HepG2 (cell line): ENCODE measurements at regions of chr6 and their contacts with region 1.

Region 1: GRCh38 chr6:41581381-41581991 is 35.3 kb downstream of the FOXP4 start:
- DNase-seq: no peak
- ATAC-seq: no peak
- H3K4me3 ChIP-seq: no peak overlapping the region
- H3K27ac ChIP-seq: no peak overlapping the region
- H3K4me1 ChIP-seq: peaks cover 86% of the 10 kb centered on the region
- H3K27me3 ChIP-seq: no peaks in the 10 kb centered on the region
- CTCF ChIP-seq: no peak
- EP300 ChIP-seq: no peak
- POLR2A ChIP-seq: no peak
- RAD21 ChIP-seq: no peak

Region 2: DNA sequence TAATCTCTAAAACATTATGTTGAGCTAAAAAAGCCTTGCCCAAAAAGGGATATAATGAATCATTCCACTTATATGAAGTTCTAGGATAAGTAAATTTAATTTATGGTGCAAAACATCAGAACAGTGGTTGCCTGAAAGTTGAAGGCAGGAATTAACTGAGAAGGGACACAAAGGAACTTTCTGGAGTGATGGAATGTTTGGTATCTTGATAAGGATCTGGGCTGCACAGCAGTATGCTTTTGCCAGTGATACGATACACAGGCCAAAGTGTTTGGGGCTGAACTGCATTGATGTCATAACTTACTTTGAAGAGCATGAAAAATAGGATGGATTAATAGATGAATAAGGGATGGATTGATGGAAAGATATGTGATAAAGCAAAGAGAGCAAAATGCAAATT is 848.2 kb before region 1 on chr6:
- CTCF ChIA-PET with region 1: no interaction called
- POLR2A ChIA-PET with region 1: no interaction called
- in situ Hi-C with region 1: no loop called
- intact Hi-C with region 1: no loop called
- DNase-seq: no peak
- ATAC-seq: no peak
- H3K4me3 ChIP-seq: no peak overlapping the region
- H3K27ac ChIP-seq: no peak overlapping the region
- H3K4me1 ChIP-seq: no peaks in the 10 kb centered on the region
- H3K27me3 ChIP-seq: peaks cover 2 to 34% of the 10 kb centered on the region in 2 experiments; a peak in 3 of 5 replicates
- CTCF ChIP-seq: no peak
- EP300 ChIP-seq: no peak
- POLR2A ChIP-seq: no peak
- RAD21 ChIP-seq: no peak

Region 3: DNA sequence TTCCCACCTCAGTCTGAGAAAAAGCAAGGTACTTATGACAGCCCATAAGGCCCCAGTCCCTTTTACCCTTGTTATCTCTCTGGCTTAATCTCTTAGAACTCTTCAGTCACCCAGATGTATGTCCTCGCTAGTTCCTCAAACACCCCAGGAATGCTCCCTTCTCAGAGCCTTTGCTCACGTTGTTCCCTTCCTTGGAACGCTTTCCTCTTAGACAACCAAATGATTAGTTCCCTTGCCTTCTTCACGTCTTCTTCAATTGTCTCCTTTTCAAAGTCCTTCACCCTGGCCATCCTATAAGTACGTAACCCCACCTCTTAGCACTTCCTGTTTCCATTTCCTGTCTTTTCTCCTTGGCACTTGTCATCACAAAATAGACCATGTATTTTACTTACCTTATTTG is 529.6 kb before region 1 on chr6:
- CTCF ChIA-PET with region 1: no interaction called
- POLR2A ChIA-PET with region 1: no interaction called
- in situ Hi-C with region 1: loop called (anchors 10 kb)
- intact Hi-C with region 1: no loop called
- DNase-seq: no peak
- ATAC-seq: no peak
- H3K4me3 ChIP-seq: no peak overlapping the region
- H3K27ac ChIP-seq: no peak overlapping the region
- H3K4me1 ChIP-seq: peaks cover 66% of the 10 kb centered on the region
- H3K27me3 ChIP-seq: no peaks in the 10 kb centered on the region
- CTCF ChIP-seq: no peak
- EP300 ChIP-seq: no peak
- POLR2A ChIP-seq: no peak
- RAD21 ChIP-seq: no peak

Region 4: GRCh38 chr6:41463062-41463930 is 118.2 kb before region 1 on chr6:
- CTCF ChIA-PET with region 1: no interaction called
- POLR2A ChIA-PET with region 1: interaction called, 11 read pairs
- in situ Hi-C with region 1: no loop called
- intact Hi-C with region 1: no loop called
- DNase-seq: peak; percentile 77
- ATAC-seq: peak; percentile 92
- H3K4me3 ChIP-seq: peak overlapping the region in 1 of 3 experiments; percentile 24; a peak in 1 of 6 replicates
- H3K27ac ChIP-seq: no peak overlapping the region
- H3K4me1 ChIP-seq: peaks cover 58% of the 10 kb centered on the region
- H3K27me3 ChIP-seq: peaks cover 0 to 24% of the 10 kb centered on the region in 2 experiments
- CTCF ChIP-seq: peak; percentile 90
- EP300 ChIP-seq: no peak; a peak in 1 of 4 replicates
- POLR2A ChIP-seq: no peak
- RAD21 ChIP-seq: peak; percentile 95

Region 5: DNA sequence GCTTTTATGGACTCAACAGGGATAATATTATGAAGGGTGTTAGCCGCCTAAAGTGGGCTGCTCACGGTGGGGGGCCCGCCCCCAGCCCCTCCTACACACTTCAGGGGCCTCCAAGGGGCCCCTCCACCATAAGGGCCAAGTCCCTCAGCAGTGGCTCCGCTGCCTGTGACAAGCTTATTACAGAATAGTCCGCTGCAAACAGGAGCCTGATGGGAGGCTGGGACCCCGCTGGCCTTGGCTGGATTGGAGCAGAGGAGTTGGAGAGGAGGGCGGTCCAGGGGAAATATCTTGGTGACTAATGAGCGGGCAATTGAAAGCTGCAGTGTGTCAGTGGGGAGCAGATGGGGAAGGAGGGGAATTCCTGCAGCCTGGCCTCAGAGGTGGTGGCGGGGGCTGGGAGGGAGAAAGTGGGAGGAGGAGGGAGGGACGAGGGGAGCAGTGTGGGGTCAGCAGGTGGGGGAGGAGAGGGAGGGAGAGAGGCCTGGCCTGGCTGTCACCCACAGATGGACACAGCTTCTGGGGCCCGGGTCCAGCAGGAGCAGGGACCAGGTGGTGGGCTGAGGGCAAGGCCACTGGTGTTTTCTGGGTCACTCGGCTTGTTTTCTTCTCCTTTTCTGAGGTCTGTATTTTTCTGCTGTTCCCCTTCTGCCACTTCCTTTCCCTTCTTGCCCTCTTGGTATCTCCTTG is 92.9 kb before region 1 on chr6:
- CTCF ChIA-PET with region 1: no interaction called
- POLR2A ChIA-PET with region 1: no interaction called
- in situ Hi-C with region 1: no loop called
- intact Hi-C with region 1: no loop called
- DNase-seq: peak; percentile 51
- ATAC-seq: peak; percentile 73
- H3K4me3 ChIP-seq: peak overlapping the region in 1 of 3 experiments; percentile 12; a peak in 1 of 6 replicates
- H3K27ac ChIP-seq: no peak overlapping the region
- H3K4me1 ChIP-seq: peaks cover 47% of the 10 kb centered on the region
- H3K27me3 ChIP-seq: peaks cover 9 to 52% of the 10 kb centered on the region in 2 experiments
- CTCF ChIP-seq: no peak
- EP300 ChIP-seq: no peak
- POLR2A ChIP-seq: no peak
- RAD21 ChIP-seq: no peak

Region 6: DNA sequence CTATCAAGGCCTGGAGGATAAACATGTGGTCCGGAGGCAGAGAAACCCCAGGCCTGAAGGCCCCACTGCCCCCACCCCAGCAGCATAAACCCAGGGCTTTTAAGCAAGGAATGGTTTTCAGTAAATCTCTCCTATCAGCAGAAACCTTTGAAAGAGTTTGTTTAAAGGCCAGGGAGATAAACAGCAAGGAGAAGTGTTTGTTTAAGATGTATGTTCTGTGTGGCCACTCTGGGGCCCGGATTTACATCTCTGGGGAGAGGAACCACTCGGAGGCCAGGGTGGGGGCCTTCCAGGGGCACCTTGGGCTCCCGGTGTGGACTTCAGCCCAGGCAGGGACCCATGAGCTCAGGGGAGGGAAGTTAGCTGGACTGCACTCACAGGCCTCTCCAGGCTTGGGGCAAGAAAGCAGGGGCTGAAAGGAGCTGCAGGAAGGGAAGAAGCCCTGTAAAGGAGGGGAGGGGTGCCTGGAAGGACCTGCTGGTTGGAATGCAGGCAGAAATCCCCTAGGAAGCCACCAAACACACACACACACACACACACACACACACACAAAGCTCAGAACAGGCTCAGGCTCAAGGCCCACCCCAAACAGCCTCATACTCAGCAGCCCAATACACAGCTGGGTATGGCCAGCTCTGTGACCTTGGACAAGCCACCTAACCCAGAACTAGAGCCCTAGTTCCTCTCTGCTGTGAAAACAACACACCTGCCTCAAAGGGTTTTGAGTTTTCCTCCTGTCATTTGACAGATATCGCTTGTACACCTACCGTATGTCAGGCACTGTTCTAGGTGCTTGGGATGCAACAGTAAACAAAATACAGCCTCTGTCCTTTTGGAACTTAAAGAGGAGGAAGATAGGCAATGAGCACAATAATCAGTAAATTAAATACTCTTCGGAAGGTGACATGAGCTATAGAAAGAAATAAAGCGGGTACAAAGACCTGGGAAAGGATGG is 61.5 kb before region 1 on chr6:
- CTCF ChIA-PET with region 1: no interaction called
- POLR2A ChIA-PET with region 1: interaction called, 60 read pairs
- in situ Hi-C with region 1: no loop called
- intact Hi-C with region 1: loop called (anchors 1 kb)
- DNase-seq: peak; percentile 97
- ATAC-seq: peak; percentile 93
- H3K4me3 ChIP-seq: peak overlapping the region in 2 of 3 experiments; percentile 8 to 50; a peak in 2 of 6 replicates
- H3K27ac ChIP-seq: peak overlapping the region; percentile 94
- H3K4me1 ChIP-seq: peaks cover 88% of the 10 kb centered on the region
- H3K27me3 ChIP-seq: no peaks in the 10 kb centered on the region
- CTCF ChIP-seq: peak; percentile 1; the same call in 1 of the 2 replicates
- EP300 ChIP-seq: peak in 1 of 2 experiments; percentile 98; a peak in 2 of 4 replicates
- POLR2A ChIP-seq: peak; percentile 74 to 77; a peak in 3 of 4 replicates
- RAD21 ChIP-seq: peak; percentile 45

Region 7: GRCh38 chr6:41545703-41546474 is 35.6 kb before region 1 on chr6 and contains the start of gene FOXP4:
- CTCF ChIA-PET with region 1: no interaction called
- POLR2A ChIA-PET with region 1: interaction called, 16 read pairs
- in situ Hi-C with region 1: no loop called
- intact Hi-C with region 1: loop called (anchors 1 kb)
- DNase-seq: peak; percentile 91
- ATAC-seq: peak; percentile 75
- H3K4me3 ChIP-seq: peak within 1 kb of the TSS; percentile 67 to 99 (median 99)
- H3K27ac ChIP-seq: peak within 1 kb of the TSS; percentile 66
- H3K4me1 ChIP-seq: peaks cover 48% of the 10 kb centered on the region
- H3K27me3 ChIP-seq: no peaks in the 10 kb centered on the region
- CTCF ChIP-seq: 0 out of 2 replicates have a peak, but pooled peaks have one; percentile 8
- EP300 ChIP-seq: 0 out of 4 replicates have a peak, but pooled peaks of 1 of the 2 experiments have one; percentile 43
- POLR2A ChIP-seq: no peak
- RAD21 ChIP-seq: peak; percentile 47; the same call in 1 of the 2 replicates
- total RNA-seq, gene FOXP4: 11.0 TPM in 2 replicates

Region 8: DNA sequence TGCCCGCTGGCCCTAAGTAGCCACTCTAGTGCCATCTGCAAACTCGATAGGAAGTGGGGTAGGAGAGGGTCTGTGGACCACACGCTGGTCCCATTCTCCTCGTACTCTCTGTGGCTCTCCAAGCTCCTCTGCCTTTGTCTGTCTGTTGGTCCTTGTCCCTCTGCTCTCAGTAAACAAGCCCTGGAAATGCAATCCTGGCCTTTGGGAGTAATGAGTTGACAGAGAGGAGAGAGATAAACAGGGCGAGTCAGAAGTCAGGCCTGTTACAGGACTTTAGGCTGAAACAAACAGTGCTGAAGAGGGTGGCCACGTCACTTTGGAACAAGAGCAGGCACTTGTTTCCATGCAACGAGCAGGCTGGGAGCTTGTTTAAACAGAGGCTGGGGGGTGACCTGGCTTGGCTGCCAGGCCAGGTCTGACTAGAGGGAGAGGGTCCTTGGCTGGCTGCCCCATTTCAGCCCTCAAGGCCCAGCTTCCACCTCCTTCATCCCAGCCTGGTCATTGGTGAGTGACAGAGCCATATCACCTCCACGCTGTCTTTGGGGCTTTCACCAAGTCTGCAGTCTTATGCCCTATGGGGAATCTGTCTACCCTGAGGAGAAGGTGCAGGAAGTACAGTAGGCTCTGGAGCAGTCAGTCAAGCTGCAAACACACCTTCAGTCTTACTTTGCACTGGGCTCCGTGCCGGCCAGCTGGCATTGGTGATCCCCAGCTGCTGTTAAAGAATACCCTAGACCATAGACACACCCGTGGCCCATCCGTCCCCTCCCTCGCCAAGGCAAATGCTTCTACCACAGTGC is 12.7 kb before region 1 on chr6:
- CTCF ChIA-PET with region 1: no interaction called
- POLR2A ChIA-PET with region 1: interaction called, 54 read pairs
- in situ Hi-C with region 1: no loop called
- intact Hi-C with region 1: loop called (anchors 1 kb)
- DNase-seq: peak; percentile 99
- ATAC-seq: peak; percentile 97
- H3K4me3 ChIP-seq: peak overlapping the region in 1 of 3 experiments; percentile 14; a peak in 1 of 6 replicates
- H3K27ac ChIP-seq: peak overlapping the region; percentile 84
- H3K4me1 ChIP-seq: peaks cover 73% of the 10 kb centered on the region
- H3K27me3 ChIP-seq: no peaks in the 10 kb centered on the region
- CTCF ChIP-seq: peak; percentile 40; the same call in 1 of the 2 replicates
- EP300 ChIP-seq: peak in 1 of 2 experiments; percentile 95; a peak in 3 of 4 replicates
- POLR2A ChIP-seq: peak in 1 of 2 experiments; percentile 11; a peak in 1 of 4 replicates
- RAD21 ChIP-seq: peak; percentile 37; the same call in 1 of the 2 replicates

Region 9: GRCh38 chr6:41659935-41660505 is 78.5 kb after region 1 on chr6:
- CTCF ChIA-PET with region 1: no interaction called
- POLR2A ChIA-PET with region 1: no interaction called
- in situ Hi-C with region 1: no loop called
- intact Hi-C with region 1: no loop called
- DNase-seq: no peak
- ATAC-seq: 0 out of 3 replicates have a peak, but pooled peaks have one; percentile 10
- H3K4me3 ChIP-seq: no peak overlapping the region
- H3K27ac ChIP-seq: no peak overlapping the region
- H3K4me1 ChIP-seq: peaks cover 31% of the 10 kb centered on the region
- H3K27me3 ChIP-seq: peaks cover 2 to 66% of the 10 kb centered on the region in 2 experiments; a peak in 4 of 5 replicates
- CTCF ChIP-seq: no peak
- EP300 ChIP-seq: no peak
- POLR2A ChIP-seq: no peak
- RAD21 ChIP-seq: no peak